Endothelial cell of umbilical vein (primary cell): ENCODE measurements at regions of chr1 and their contacts with region 1.

Region 1: DNA sequence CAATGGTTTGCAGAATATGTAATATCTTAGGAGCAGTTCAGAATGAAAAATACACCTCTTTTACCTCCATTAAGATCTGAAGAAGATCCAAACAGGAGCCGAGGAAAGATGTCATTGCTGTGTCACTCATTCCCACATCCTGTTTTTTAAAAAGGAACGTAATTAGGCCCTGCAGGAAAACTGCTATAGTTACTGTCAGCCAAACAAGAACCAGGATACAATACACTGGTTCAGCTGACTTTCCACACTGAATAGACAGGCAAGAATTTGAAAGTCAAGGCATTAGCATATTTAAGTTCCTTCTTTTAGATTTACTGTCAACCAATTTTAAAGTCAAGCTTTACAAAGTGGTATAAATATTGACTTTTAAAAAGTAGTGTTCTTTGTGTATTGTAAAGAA is 63.8 kb downstream of the IARS2 start:
- DNase-seq: peak; percentile 34
- H3K4me3 ChIP-seq: no peak overlapping the region
- H3K27ac ChIP-seq: no peak overlapping the region
- H3K4me1 ChIP-seq: peaks cover 3% of the 10 kb centered on the region
- H3K27me3 ChIP-seq: no peaks in the 10 kb centered on the region
- CTCF ChIP-seq: no peak
- POLR2A ChIP-seq: no peak

Region 2: GRCh38 chr1:220137019-220137786 is 20.5 kb before region 1 on chr1:
- CTCF ChIA-PET with region 1: no interaction called
- POLR2A ChIA-PET with region 1: no interaction called
- dilution Hi-C with region 1: no loop called
- intact Hi-C with region 1: loop called (anchors 2 kb)
- DNase-seq: peak; percentile 94
- H3K4me3 ChIP-seq: peak overlapping the region in 1 of 3 experiments; percentile 16
- H3K27ac ChIP-seq: peak overlapping the region; percentile 89
- H3K4me1 ChIP-seq: peaks cover 7% of the 10 kb centered on the region
- H3K27me3 ChIP-seq: no peaks in the 10 kb centered on the region
- CTCF ChIP-seq: no peak
- POLR2A ChIP-seq: no peak

Region 3: DNA sequence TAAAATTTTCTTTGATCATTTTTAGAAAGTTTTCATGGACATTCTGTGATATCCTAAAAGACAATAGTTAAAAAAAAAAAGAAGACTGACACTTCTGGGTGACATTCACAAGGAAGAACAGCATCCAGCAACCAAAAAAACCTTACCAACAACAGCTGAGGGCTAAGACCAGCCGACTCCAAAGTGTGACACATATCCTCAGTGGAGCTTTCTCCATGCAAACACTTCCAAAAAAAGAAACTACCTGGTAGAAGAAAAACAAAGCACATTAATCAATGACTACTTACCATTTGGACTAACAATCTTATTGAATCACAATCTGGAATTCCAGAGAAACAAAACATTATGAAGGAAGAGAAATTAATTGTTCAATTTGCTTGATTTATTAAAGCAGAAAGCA is 24.4 kb after region 1 on chr1:
- CTCF ChIA-PET with region 1: no interaction called
- POLR2A ChIA-PET with region 1: no interaction called
- dilution Hi-C with region 1: no loop called
- intact Hi-C with region 1: no loop called
- DNase-seq: peak; percentile 27
- H3K4me3 ChIP-seq: no peak overlapping the region
- H3K27ac ChIP-seq: no peak overlapping the region
- H3K4me1 ChIP-seq: peaks cover 5% of the 10 kb centered on the region
- H3K27me3 ChIP-seq: no peaks in the 10 kb centered on the region
- CTCF ChIP-seq: no peak
- POLR2A ChIP-seq: no peak